ENCODE measurements at regions of chr6 and their contacts with region 1.

Region 1: GRCh38 chr6:166106076-166106686 is 61.5 kb downstream of the TBXT start:
- DNase-seq: peak; percentile 71
- ATAC-seq: peak; percentile 94
- H3K4me3 ChIP-seq: no peak overlapping the region
- H3K27ac ChIP-seq: no peak overlapping the region
- H3K4me1 ChIP-seq: no peaks in the 10 kb centered on the region
- H3K27me3 ChIP-seq: peaks cover 6% of the 10 kb centered on the region; the same call in 1 of the 2 replicates
- CTCF ChIP-seq: peak; percentile 98
- POLR2A ChIP-seq: peak; percentile 60
- RAD21 ChIP-seq: peak; percentile 99

Region 2: DNA sequence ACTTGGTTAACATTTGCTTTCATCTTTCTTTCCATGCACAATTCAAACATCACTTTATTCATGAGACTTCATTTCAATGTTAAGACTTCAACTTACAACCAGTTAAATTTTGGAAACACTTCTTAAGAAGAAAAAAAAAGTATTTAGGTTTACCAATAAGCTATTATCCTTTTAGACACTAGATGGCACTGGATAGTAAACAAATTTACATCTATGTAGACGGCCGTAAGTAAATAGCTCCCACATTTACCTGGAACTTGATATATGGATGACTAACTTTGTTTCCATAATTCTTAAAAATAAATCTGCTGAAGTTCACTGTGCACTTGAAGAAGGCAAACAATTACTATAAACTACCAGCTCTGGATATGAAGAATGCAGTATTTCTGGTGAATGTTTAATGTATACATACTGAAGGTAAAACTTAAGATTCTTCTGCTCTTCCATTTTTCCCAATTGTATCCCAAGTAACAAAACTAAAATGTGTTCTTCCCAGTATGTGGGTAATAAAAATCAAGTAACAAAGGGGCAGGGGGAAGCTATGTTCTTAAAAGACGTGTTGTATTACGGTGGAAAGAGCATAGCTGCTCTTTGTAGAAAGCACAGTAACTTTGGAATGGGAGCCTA is 666.1 kb before region 1 on chr6:
- CTCF ChIA-PET with region 1: no interaction called
- POLR2A ChIA-PET with region 1: no interaction called
- dilution Hi-C with region 1: no loop called
- in situ Hi-C with region 1: loop called (anchors 25 kb)
- intact Hi-C with region 1: loop called (anchors 5 kb)
- DNase-seq: peak; percentile 73
- ATAC-seq: peak; percentile 65
- H3K4me3 ChIP-seq: no peak overlapping the region
- H3K27ac ChIP-seq: no peak overlapping the region
- H3K4me1 ChIP-seq: no peaks in the 10 kb centered on the region
- H3K27me3 ChIP-seq: no peaks in the 10 kb centered on the region
- CTCF ChIP-seq: peak; percentile 65
- POLR2A ChIP-seq: no peak
- RAD21 ChIP-seq: peak; percentile 68

Region 3: GRCh38 chr6:165729307-165729936 is 376.8 kb before region 1 on chr6:
- CTCF ChIA-PET with region 1: interaction called, 3 read pairs
- POLR2A ChIA-PET with region 1: no interaction called
- dilution Hi-C with region 1: no loop called
- in situ Hi-C with region 1: loop called (anchors 10 kb)
- intact Hi-C with region 1: loop called (anchors 1 kb)
- DNase-seq: peak; percentile 10
- ATAC-seq: peak; percentile 71
- H3K4me3 ChIP-seq: no peak overlapping the region
- H3K27ac ChIP-seq: no peak overlapping the region
- H3K4me1 ChIP-seq: 0 out of 2 replicates have a peak, but pooled peaks cover 2% of the 10 kb centered on the region
- H3K27me3 ChIP-seq: peaks cover 10% of the 10 kb centered on the region
- CTCF ChIP-seq: peak; percentile 60
- POLR2A ChIP-seq: no peak
- RAD21 ChIP-seq: peak; percentile 38; the same call in 1 of the 2 replicates

Region 4: DNA sequence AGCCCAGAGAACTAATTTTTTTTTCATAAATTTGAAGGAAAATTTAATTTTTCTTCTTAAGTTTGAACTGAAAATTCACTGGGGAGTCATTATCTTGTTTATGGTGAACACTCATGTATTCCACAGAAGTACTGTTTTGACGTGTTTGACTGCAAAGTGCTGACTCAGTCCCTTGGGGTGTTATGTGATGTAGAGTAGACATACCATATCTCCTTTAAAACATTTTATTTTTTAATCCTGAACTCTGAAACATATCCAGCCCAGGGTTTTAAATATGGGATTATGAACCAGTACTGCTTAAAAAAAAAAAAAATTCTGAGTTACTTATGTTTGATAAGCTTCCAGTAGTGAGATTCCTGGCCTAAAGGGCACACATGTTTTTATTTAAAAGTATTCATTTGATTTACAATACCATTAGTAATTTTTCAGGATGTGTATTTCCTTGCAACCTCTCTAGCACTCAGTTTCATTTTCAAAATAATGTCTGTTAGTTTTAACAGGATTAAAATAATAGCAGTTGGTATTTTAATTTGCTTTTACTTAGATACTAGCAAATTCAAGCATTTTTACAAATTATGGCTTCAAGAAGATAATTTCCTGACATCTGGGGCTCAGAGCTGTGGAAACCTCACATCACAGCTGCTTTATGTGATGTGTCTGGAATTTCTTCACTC is 361.5 kb before region 1 on chr6:
- CTCF ChIA-PET with region 1: no interaction called
- POLR2A ChIA-PET with region 1: no interaction called
- dilution Hi-C with region 1: no loop called
- in situ Hi-C with region 1: no loop called
- intact Hi-C with region 1: loop called (anchors 5 kb)
- DNase-seq: peak; percentile 41
- ATAC-seq: peak; percentile 60
- H3K4me3 ChIP-seq: no peak overlapping the region
- H3K27ac ChIP-seq: no peak overlapping the region
- H3K4me1 ChIP-seq: peaks cover 4% of the 10 kb centered on the region; the same call in 1 of the 2 replicates
- H3K27me3 ChIP-seq: peaks cover 7% of the 10 kb centered on the region
- CTCF ChIP-seq: no peak
- POLR2A ChIP-seq: no peak
- RAD21 ChIP-seq: no peak

Region 5: GRCh38 chr6:165884813-165885765 is 221.1 kb before region 1 on chr6:
- CTCF ChIA-PET with region 1: interaction called, 25 read pairs
- POLR2A ChIA-PET with region 1: no interaction called
- dilution Hi-C with region 1: no loop called
- in situ Hi-C with region 1: no loop called
- intact Hi-C with region 1: loop called (anchors 1 kb)
- DNase-seq: peak; percentile 68
- ATAC-seq: peak; percentile 96
- H3K4me3 ChIP-seq: no peak overlapping the region
- H3K27ac ChIP-seq: no peak overlapping the region
- H3K4me1 ChIP-seq: peaks cover 7% of the 10 kb centered on the region
- H3K27me3 ChIP-seq: no peaks in the 10 kb centered on the region
- CTCF ChIP-seq: peak; percentile 95
- POLR2A ChIP-seq: peak; percentile 46; the same call in 1 of the 2 replicates
- RAD21 ChIP-seq: peak; percentile 95

Region 6: GRCh38 chr6:165937564-165938358 is 168.4 kb before region 1 on chr6:
- CTCF ChIA-PET with region 1: no interaction called
- POLR2A ChIA-PET with region 1: no interaction called
- dilution Hi-C with region 1: no loop called
- in situ Hi-C with region 1: no loop called
- intact Hi-C with region 1: no loop called
- DNase-seq: no peak
- ATAC-seq: no peak
- H3K4me3 ChIP-seq: no peak overlapping the region
- H3K27ac ChIP-seq: no peak overlapping the region
- H3K4me1 ChIP-seq: no peaks in the 10 kb centered on the region; the same call in 1 of the 2 replicates
- H3K27me3 ChIP-seq: no peaks in the 10 kb centered on the region
- CTCF ChIP-seq: no peak
- POLR2A ChIP-seq: no peak
- RAD21 ChIP-seq: no peak

Region 7: DNA sequence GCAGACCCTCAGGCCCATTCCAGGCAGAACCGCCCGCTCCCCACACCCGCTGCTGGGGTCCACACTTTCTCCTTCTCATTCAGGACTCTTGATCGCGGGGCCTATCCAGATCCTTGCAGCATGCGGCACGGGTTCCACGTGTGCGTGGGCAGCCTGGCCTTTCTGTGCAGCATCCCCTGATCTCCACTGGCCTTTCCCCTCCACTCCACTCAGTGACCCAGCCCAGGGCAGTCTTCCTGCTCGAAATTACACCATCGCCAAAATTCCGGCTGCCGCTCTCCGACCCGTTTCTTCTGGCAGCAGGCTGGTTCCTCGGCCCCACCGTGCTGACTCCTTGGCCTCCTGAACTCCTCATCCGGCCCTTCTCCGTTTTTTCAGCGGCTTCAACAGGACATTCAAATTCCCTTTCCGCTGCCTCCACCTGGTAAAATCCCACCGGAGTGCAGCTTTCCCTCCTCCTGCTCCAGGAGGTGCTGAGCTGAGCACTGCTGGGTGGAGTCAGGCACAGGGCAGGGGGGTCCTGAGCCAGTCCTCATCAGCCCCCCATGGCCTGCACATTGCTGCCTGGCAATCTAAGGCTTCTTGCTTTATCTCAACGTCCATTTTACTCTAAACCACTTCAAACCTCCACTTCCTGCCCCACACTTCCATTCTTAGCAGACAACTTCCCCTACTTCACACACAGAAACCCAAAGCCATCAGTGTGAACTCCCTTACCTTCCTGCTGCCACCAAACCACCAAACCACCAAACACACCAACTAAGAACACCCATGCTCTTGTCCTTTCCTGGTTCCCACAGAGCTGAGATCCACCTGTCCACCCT is 227.2 kb after region 1 on chr6:
- CTCF ChIA-PET with region 1: no interaction called
- POLR2A ChIA-PET with region 1: no interaction called
- dilution Hi-C with region 1: no loop called
- in situ Hi-C with region 1: no loop called
- intact Hi-C with region 1: no loop called
- DNase-seq: no peak
- ATAC-seq: no peak
- H3K4me3 ChIP-seq: no peak overlapping the region
- H3K27ac ChIP-seq: no peak overlapping the region
- H3K4me1 ChIP-seq: peaks cover 11% of the 10 kb centered on the region; the same call in 1 of the 2 replicates
- H3K27me3 ChIP-seq: no peaks in the 10 kb centered on the region
- CTCF ChIP-seq: no peak
- POLR2A ChIP-seq: no peak
- RAD21 ChIP-seq: no peak

Measured in IMR-90 (cell line).